Activated naive CD4-positive, alpha-beta T cell treated with anti-CD3 and anti-CD28 coated beads for 36 hours (primary cell): ENCODE measurements at regions of chr21 and their contacts with region 1.

Region 1: GRCh38 chr21:32929633-32930038 is 96.1 kb upstream of the OLIG2 start:
- DNase-seq: peak; percentile 22
- H3K4me3 Mint-ChIP-seq: no peak overlapping the region
- H3K27ac Mint-ChIP-seq: peak overlapping the region; percentile 20
- H3K4me1 Mint-ChIP-seq: peaks cover 36% of the 10 kb centered on the region
- H3K27me3 Mint-ChIP-seq: no peaks in the 10 kb centered on the region

Region 2: DNA sequence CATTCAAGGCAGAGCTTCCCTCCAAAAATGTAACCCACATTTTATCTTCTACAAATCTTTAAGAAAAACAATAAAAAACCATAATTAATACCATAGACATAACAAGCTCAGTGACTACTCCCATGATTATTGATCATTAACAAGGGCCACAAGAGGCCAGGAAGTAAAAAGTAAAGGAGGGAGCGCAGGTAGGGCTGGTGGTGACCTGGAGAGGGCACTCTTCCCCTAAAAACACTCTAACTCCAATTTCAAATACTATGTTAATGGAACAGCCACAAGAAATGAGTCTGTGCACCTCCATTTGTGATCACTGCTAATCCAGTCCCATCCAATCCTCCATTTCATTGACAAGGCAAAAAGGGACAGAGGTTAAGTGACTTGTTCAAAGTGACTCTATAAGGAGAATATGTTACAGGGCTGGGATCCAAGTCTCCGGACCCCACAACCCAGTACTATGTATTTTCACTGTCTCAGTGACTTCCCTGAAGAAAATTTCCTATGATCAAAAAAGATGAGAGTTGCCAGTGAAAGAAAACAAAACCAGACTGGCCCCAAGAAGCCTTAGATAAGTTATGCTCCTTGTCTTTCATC is 276.2 kb before region 1 on chr21:
- CTCF ChIA-PET with region 1: no interaction called
- intact Hi-C with region 1: loop called (anchors 10 kb)
- DNase-seq: peak; percentile 50
- H3K4me3 Mint-ChIP-seq: no peak overlapping the region
- H3K27ac Mint-ChIP-seq: no peak overlapping the region
- H3K4me1 Mint-ChIP-seq: peaks cover 3% of the 10 kb centered on the region
- H3K27me3 Mint-ChIP-seq: no peaks in the 10 kb centered on the region

Region 3: GRCh38 chr21:32834916-32835235 is 94.8 kb before region 1 on chr21:
- CTCF ChIA-PET with region 1: interaction called, 3 read pairs
- intact Hi-C with region 1: loop called (anchors 5 kb)
- DNase-seq: no peak
- H3K4me3 Mint-ChIP-seq: no peak overlapping the region
- H3K27ac Mint-ChIP-seq: no peak overlapping the region
- H3K4me1 Mint-ChIP-seq: no peaks in the 10 kb centered on the region
- H3K27me3 Mint-ChIP-seq: no peaks in the 10 kb centered on the region

Region 4: DNA sequence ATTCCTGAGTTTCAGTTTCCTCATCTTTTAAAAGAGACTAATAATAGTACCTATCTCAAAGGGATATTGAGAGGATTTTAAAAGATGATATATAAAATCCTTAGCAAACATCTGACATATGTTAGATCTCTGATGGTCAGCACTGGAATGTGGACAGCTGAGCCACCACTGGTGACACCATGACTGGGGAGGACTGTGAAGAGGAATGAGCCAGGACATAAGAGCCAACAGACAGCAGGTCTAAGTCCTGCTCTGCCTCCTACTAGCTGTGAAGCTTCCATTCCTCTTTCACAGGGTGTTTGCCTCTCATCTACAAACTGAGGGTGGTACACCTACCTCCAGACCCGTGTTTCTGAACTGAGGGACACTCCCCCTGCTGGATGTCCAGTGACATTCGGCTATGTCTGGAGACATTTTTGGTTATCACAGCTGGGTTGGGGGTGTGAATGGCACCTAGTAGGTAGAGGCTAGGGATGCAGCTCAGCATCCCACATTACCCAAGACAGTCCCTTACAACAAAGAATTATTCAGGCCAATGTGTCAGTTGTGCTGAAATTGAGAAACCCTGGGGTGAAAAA is 13.0 kb before region 1 on chr21:
- CTCF ChIA-PET with region 1: interaction called, 6 read pairs
- intact Hi-C with region 1: loop called (anchors 2 kb)
- DNase-seq: peak; percentile 13
- H3K4me3 Mint-ChIP-seq: no peak overlapping the region
- H3K27ac Mint-ChIP-seq: no peak overlapping the region
- H3K4me1 Mint-ChIP-seq: peaks cover 27% of the 10 kb centered on the region
- H3K27me3 Mint-ChIP-seq: no peaks in the 10 kb centered on the region

Region 5: DNA sequence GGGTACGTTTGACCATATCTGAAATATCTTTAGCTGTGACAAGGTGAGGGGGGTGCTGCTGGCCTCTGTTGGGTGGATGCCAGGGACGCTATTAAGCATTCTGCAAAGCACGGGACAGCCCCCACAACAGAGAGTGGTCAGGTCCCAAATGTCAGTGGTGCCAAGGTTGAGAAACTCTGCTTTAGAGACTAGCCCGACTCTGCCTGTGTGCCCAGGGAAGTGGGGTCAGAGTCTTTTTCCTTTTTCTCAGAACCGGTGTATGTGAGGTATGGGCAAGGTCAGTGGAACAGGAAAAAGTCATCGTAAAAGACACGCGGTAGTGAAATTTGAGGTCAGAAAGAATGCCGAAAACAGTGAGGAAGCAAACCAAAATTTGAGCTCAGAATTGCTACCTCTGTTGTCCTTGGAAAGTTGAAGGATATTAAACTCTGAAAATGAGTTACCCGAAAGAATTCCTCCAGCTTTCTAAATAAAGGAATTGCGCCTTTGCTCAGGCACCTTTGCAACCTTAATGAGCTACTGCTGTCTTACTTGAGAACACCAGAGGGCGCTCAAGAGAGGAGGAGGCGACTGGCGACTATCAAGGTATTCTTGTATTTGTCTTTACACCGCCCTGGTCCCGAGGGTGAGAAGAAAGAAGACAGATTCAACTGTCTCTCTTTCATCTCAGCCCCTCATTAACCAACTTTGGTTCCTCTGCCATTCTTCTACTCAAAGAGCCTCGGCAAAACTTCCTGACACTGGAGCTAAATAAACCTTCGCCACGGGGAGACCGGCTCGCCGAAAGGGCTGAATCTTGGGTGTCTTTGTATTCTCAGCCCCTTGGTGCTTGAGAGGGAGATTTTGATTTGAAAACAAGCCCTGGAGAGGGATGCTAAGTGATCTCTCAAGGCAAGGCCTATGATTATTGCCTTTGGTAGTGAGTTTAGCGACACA is 10.7 kb after region 1 on chr21:
- CTCF ChIA-PET with region 1: interaction called, 15 read pairs
- intact Hi-C with region 1: no loop called
- DNase-seq: peak; percentile 60
- H3K4me3 Mint-ChIP-seq: no peak overlapping the region
- H3K27ac Mint-ChIP-seq: no peak overlapping the region
- H3K4me1 Mint-ChIP-seq: peaks cover 4% of the 10 kb centered on the region
- H3K27me3 Mint-ChIP-seq: no peaks in the 10 kb centered on the region

Region 6: GRCh38 chr21:33069976-33070811 is 140.6 kb after region 1 on chr21 and contains the start of gene OLIG1:
- CTCF ChIA-PET with region 1: no interaction called
- intact Hi-C with region 1: no loop called
- DNase-seq: peak; percentile 25
- H3K4me3 Mint-ChIP-seq: peak within 1 kb of the TSS; percentile 65
- H3K27ac Mint-ChIP-seq: no peak within 1 kb of the TSS
- H3K4me1 Mint-ChIP-seq: peaks cover 10% of the 10 kb centered on the region
- H3K27me3 Mint-ChIP-seq: peaks cover 53% of the 10 kb centered on the region
- total RNA-seq, gene OLIG1: not detected

Region 7: GRCh38 chr21:33229784-33230544 is 300.3 kb after region 1 on chr21 and contains the start of gene IFNAR2:
- CTCF ChIA-PET with region 1: no interaction called
- intact Hi-C with region 1: loop called (anchors 1 kb)
- DNase-seq: peak; percentile 73
- H3K4me3 Mint-ChIP-seq: peak within 1 kb of the TSS; percentile 89
- H3K27ac Mint-ChIP-seq: peak within 1 kb of the TSS; percentile 92
- H3K4me1 Mint-ChIP-seq: peaks cover 52% of the 10 kb centered on the region
- H3K27me3 Mint-ChIP-seq: no peaks in the 10 kb centered on the region
- total RNA-seq, gene IFNAR2: 16.6 to 19.4 TPM

Region 8: GRCh38 chr21:33441489-33442477 is 512.1 kb after region 1 on chr21:
- CTCF ChIA-PET with region 1: no interaction called
- intact Hi-C with region 1: loop called (anchors 10 kb)
- DNase-seq: no peak
- H3K4me3 Mint-ChIP-seq: no peak overlapping the region
- H3K27ac Mint-ChIP-seq: no peak overlapping the region
- H3K4me1 Mint-ChIP-seq: peaks cover 4% of the 10 kb centered on the region
- H3K27me3 Mint-ChIP-seq: no peaks in the 10 kb centered on the region